ENCODE measurements at regions of chr3 and their contacts with region 1.

Region 1: DNA sequence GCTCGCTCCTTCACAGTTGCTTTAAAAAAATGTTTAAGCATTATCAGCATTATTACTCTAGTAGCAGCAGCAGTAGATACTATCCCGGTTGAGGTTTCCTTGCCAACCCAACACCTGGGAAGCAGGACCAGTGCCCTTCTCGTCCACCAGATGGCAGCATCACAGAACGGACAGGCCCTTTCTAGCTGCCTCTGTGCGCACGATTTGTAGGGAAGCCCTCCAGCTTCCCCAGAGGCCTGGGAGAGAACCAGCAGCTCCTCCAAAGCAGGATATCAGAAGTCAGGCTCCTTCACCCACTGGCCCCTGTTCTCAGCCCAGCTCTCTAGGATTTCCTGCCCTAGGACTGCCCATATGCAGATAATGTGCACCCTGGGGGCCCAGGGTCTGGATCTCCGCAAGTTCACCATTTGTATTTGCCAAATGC is 16.8 kb upstream of the ESYT3 start:
- DNase-seq: peak; percentile 85
- H3K4me3 Mint-ChIP-seq: no peak overlapping the region
- H3K27ac Mint-ChIP-seq: no peak overlapping the region
- H3K4me1 Mint-ChIP-seq: no peaks in the 10 kb centered on the region
- H3K27me3 Mint-ChIP-seq: no peaks in the 10 kb centered on the region
- CTCF ChIP-seq: peak; percentile 84

Region 2: GRCh38 chr3:138241061-138241460 is 176.5 kb before region 1 on chr3:
- CTCF ChIA-PET with region 1: no interaction called
- POLR2A ChIA-PET with region 1: no interaction called
- intact Hi-C with region 1: no loop called
- DNase-seq: no peak
- H3K4me3 Mint-ChIP-seq: no peak overlapping the region
- H3K27ac Mint-ChIP-seq: no peak overlapping the region
- H3K4me1 Mint-ChIP-seq: no peaks in the 10 kb centered on the region
- H3K27me3 Mint-ChIP-seq: no peaks in the 10 kb centered on the region
- CTCF ChIP-seq: no peak

Region 3: DNA sequence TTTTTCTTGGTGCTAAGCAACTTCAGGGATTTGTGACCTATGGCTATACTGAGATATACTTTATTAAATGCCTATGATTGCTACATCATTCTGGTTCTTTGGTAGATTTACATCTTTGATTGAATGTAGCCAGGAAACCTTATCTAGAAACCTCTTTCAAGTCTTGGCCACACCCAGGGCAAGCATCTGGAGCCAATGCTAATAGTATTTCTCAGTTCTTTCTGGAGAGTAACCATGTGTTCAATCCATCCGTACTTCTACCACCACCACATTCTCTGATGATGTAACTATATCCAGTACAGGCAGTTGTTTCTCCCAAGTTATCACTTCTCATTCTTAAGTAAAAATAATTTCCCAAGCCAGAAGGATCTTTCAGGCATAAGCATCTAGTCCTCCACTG is 157.0 kb before region 1 on chr3:
- CTCF ChIA-PET with region 1: no interaction called
- POLR2A ChIA-PET with region 1: no interaction called
- intact Hi-C with region 1: no loop called
- DNase-seq: no peak
- H3K4me3 Mint-ChIP-seq: no peak overlapping the region
- H3K27ac Mint-ChIP-seq: no peak overlapping the region
- H3K4me1 Mint-ChIP-seq: no peaks in the 10 kb centered on the region
- H3K27me3 Mint-ChIP-seq: no peaks in the 10 kb centered on the region
- CTCF ChIP-seq: no peak

Region 4: DNA sequence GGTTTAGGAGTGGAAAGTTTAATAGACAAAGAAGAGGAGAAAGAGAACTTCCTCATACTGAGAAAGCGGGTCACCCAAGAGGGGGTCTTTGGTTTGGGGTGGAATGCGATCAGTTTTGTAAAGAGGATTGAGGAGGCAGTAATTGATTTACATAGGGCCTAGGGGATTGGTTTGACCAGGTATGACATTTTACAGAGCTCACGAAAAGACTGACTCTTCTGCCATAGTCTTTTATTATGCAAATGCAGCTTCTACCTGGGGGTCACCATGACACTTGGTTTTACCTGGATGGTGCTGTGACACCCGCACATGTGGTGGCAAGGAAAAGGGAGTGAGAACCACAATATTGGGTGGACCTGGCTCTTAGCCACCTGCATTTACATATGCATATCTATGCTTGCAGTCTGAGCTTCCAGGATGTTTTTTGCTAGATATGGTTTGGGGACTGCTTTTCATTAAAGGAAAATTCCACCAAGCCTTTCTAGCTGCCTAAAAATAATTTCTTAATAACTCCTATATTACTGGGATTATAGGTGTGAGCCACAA is 81.0 kb before region 1 on chr3:
- CTCF ChIA-PET with region 1: interaction called, 20 read pairs
- POLR2A ChIA-PET with region 1: no interaction called
- intact Hi-C with region 1: loop called (anchors 5 kb)
- DNase-seq: no peak
- H3K4me3 Mint-ChIP-seq: no peak overlapping the region
- H3K27ac Mint-ChIP-seq: no peak overlapping the region
- H3K4me1 Mint-ChIP-seq: no peaks in the 10 kb centered on the region
- H3K27me3 Mint-ChIP-seq: no peaks in the 10 kb centered on the region
- CTCF ChIP-seq: no peak

Region 5: DNA sequence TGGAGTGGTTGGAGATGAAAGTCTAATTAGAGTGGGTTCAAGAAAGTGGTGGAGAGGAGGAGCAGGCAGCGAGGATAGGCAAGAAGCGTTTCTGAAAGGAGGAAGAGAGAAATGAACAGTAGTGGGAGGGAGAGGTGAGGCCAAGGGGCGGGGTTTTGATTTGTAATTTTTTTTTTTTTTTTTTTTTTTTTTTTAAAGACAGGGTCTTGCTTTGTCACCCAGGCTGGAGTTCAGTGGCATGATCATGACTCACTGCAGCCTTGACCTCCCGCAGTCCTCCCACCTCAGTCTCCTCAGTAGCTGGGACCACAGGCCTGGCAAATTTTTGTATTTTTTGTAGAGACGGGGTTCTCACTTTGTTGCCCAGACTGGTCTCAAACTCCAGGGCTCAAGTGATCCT is 32.6 kb before region 1 on chr3:
- CTCF ChIA-PET with region 1: interaction called, 21 read pairs
- POLR2A ChIA-PET with region 1: no interaction called
- intact Hi-C with region 1: no loop called
- DNase-seq: no peak
- H3K4me3 Mint-ChIP-seq: no peak overlapping the region
- H3K27ac Mint-ChIP-seq: peak overlapping the region; percentile 30
- H3K4me1 Mint-ChIP-seq: peaks cover 28% of the 10 kb centered on the region
- H3K27me3 Mint-ChIP-seq: no peaks in the 10 kb centered on the region
- CTCF ChIP-seq: no peak

Region 6: DNA sequence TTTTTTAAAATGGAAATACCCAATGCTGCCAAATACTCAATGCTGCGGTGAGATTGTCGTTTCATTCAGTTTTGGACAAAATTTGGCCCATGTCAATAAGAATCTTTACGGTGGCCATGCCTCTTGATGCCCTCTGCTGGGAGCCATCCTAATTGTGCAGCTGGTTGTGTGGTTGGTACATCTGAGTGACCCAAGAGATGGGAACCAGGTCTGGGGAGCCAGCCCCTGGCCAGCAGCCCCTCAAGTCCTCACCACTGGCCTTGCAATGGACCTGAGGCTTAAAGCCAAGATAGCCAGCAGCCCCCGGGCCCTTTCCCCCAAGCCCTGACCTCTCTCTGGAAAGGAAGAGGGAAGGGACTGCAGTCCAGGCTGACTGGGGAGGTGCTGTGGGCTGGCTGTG is 19.6 kb before region 1 on chr3:
- CTCF ChIA-PET with region 1: interaction called, 130 read pairs
- POLR2A ChIA-PET with region 1: no interaction called
- intact Hi-C with region 1: no loop called
- DNase-seq: peak; percentile 32
- H3K4me3 Mint-ChIP-seq: no peak overlapping the region
- H3K27ac Mint-ChIP-seq: no peak overlapping the region
- H3K4me1 Mint-ChIP-seq: no peaks in the 10 kb centered on the region
- H3K27me3 Mint-ChIP-seq: no peaks in the 10 kb centered on the region
- CTCF ChIP-seq: peak; percentile 36

Region 7: DNA sequence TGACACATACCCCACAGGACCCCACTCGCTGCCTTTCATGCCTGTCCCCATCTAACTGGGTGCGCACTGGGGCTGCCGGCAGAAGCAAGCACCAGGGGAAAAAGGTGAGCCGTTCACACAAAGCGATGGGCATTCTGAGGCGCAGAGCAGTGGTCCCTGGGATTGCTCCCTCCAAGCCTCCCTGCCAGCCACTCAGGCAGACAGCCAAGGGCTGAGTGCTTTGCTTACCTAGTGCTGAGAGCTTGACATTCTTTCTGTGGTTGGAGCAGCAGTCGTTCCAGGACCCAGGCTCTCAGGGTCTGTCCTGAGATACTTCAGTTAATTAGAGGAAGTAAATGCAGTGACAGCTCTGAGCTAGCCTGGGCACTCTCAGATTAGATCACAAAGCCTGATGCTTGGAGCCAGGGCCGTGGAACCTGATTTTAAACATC is 22.6 kb after region 1 on chr3:
- CTCF ChIA-PET with region 1: interaction called, 23 read pairs
- POLR2A ChIA-PET with region 1: interaction called, 5 read pairs
- intact Hi-C with region 1: no loop called
- DNase-seq: no peak
- H3K4me3 Mint-ChIP-seq: no peak overlapping the region
- H3K27ac Mint-ChIP-seq: no peak overlapping the region
- H3K4me1 Mint-ChIP-seq: peaks cover 10% of the 10 kb centered on the region
- H3K27me3 Mint-ChIP-seq: no peaks in the 10 kb centered on the region
- CTCF ChIP-seq: no peak

Region 8: GRCh38 chr3:138479438-138479863 is 61.9 kb after region 1 on chr3:
- CTCF ChIA-PET with region 1: interaction called, 10 read pairs
- POLR2A ChIA-PET with region 1: no interaction called
- intact Hi-C with region 1: loop called (anchors 5 kb)
- DNase-seq: peak; percentile 62
- H3K4me3 Mint-ChIP-seq: no peak overlapping the region
- H3K27ac Mint-ChIP-seq: peak overlapping the region; percentile 57
- H3K4me1 Mint-ChIP-seq: peaks cover 6% of the 10 kb centered on the region
- H3K27me3 Mint-ChIP-seq: no peaks in the 10 kb centered on the region
- CTCF ChIP-seq: peak; percentile 88

Region 9: DNA sequence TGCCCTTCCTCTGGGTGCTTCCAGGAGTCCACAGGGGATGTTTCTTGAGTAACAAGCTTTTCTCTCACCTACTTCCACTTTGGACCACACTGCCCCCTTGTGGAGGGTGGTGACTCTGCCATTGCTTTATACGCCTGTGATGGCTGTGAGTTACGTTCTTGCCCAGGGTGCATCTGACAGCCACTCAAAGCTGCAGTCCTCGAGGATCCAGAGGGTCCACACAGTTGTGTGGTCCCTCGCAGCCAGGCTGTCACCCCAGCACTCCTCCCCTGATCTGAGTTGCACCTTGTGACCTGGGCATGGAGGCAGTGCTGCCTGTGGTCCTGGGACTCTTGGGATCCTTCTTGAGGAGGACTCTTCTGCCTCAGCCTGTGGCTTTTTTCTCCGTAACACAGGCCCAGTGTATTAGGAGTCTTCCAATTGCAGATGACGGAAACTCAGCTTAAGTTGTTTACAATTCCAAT is 506.0 kb after region 1 on chr3:
- CTCF ChIA-PET with region 1: interaction called, 164 read pairs
- POLR2A ChIA-PET with region 1: no interaction called
- intact Hi-C with region 1: loop called (anchors 1 kb)
- DNase-seq: peak; percentile 93
- H3K4me3 Mint-ChIP-seq: no peak overlapping the region
- H3K27ac Mint-ChIP-seq: peak overlapping the region; percentile 15
- H3K4me1 Mint-ChIP-seq: peaks cover 17% of the 10 kb centered on the region
- H3K27me3 Mint-ChIP-seq: no peaks in the 10 kb centered on the region
- CTCF ChIP-seq: peak; percentile 79